Activated CD8-positive, alpha-beta T cell treated with anti-CD3 and anti-CD28 coated beads for 36 hours (primary cell): ENCODE measurements at regions of chr5 and their contacts with region 1.

Region 1: GRCh38 chr5:113281194-113281593 is 153.6 kb downstream of the TSSK1B start:
- DNase-seq: no peak
- ATAC-seq: no peak
- H3K4me3 Mint-ChIP-seq: no peak overlapping the region
- H3K27ac Mint-ChIP-seq: no peak overlapping the region
- H3K4me1 Mint-ChIP-seq: peaks cover 20% of the 10 kb centered on the region
- H3K27me3 Mint-ChIP-seq: no peaks in the 10 kb centered on the region
- CTCF ChIP-seq: no peak

Region 2: DNA sequence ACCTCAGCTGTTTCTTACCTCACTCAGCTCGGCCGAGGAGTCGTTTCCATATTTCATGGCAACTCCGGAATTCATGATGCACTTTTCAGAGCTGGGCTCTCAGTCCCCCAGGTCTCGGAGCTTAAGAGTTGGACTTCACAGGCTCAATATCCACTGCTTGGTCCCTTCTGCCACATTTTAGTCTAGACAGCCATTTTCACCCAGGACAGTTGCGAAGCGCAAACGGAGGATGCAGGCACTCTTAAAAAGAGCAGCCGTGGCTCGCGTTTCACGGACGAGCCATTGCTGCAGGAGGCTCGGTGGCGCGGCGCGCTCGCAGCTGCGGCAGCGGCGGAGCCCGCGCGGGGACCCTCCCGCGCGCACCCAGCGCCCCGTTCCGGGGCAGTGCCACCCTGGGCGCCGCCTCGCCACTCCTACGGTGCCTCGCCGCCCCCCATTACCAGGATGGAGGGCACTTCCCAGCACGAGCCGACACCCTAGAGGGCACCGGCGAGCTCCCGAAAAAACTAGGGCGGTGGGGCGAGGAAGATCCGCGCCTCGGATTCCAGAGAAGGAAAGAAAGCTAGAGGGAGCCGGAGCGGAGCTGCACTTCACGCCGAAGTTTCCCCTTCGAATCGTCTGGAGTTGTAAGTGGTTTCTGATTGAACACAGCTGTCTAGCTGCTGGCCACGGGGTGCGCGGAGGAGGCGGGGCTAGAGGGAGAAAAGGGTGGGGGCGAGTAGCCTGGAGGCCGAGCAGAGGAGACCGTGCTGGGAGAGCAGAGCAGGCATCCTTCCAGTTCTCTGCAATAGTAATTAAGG is 13.3 kb after region 1 on chr5:
- CTCF ChIA-PET with region 1: interaction called, 10 read pairs
- POLR2A ChIA-PET with region 1: interaction called, 5 read pairs
- intact Hi-C with region 1: no loop called
- DNase-seq: peak; percentile 89
- ATAC-seq: peak; percentile 94
- H3K4me3 Mint-ChIP-seq: peak overlapping the region; percentile 89
- H3K27ac Mint-ChIP-seq: peak overlapping the region; percentile 79
- H3K4me1 Mint-ChIP-seq: peaks cover 14% of the 10 kb centered on the region
- H3K27me3 Mint-ChIP-seq: peaks cover 19% of the 10 kb centered on the region
- CTCF ChIP-seq: no peak